Heart left ventricle (tissue), 16 donors: ENCODE measurements at regions of chr6 and their contacts with region 1.

Region 1: GRCh38 chr6:155248008-155249001 is 15.5 kb upstream of the CLDN20 start:
- DNase-seq: peak in 3 of 5 donors; percentile 24 to 38 (median 34)
- ATAC-seq: peak in 3 of 4 donors; percentile 20 to 38 (median 37)
- H3K4me3 ChIP-seq: no peak overlapping the region
- H3K27ac ChIP-seq: peak overlapping the region in 1 of 12 donors; percentile 56
- H3K4me1 ChIP-seq: peaks cover 0 to 20% (median 6%) of the 10 kb centered on the region in 12 donors
- H3K27me3 ChIP-seq: no peaks in the 10 kb centered on the region
- CTCF ChIP-seq: peak; percentile 29 to 78 (median 58)
- POLR2A ChIP-seq: no peak

Region 2: DNA sequence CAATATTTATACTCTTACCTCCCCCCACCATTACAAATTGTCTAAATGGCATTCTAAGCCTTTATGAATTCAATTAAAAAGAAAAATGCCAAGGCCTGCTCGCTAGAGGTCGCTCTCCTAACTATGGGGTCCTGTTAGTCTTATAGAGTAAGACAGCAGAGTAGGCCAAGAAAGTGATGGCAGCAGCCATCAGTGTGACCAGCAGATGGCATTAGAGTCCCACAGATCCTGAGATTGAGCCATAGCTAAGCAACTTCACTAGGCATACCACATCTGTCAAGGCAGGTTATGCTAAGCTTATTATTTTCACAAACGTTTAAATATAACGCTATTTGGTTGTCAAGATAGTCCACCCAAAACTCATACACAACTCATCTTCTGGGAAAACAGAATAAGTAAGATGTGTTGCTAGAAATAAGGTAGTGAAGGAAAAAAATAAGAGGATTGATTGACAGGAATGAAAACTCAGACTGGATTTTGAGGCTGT is 572.7 kb before region 1 on chr6:
- intact Hi-C with region 1: loop called in 2 of 10 experiments (anchors 10 kb)
- DNase-seq: peak; percentile 74 to 87 (median 83)
- ATAC-seq: peak; percentile 94 to 99 (median 98)
- H3K4me3 ChIP-seq: no peak overlapping the region
- H3K27ac ChIP-seq: no peak overlapping the region
- H3K4me1 ChIP-seq: no peaks in the 10 kb centered on the region
- H3K27me3 ChIP-seq: no peaks in the 10 kb centered on the region
- CTCF ChIP-seq: peak; percentile 95 to 100 (median 100)
- POLR2A ChIP-seq: no peak

Region 3: DNA sequence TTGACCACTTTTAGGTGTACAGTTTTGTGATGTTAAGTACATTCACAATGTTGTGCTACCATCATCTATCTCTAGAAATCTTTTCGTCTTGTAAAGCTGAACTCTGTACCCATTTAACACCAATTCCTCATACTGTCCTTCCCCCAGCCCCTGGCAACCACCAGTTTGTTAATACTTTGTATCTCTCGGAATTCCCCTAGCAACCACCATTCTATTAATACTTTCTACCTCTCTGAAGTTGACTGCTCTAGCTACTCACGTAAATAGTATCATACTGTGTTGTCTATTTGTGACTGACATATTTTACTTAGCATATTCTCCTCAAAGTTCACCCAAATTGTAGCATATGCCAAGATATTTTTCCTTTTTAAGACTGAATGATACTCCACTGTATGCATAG is 66.8 kb before region 1 on chr6:
- intact Hi-C with region 1: loop called (anchors 2 to 5 kb)
- DNase-seq: no peak
- ATAC-seq: no peak
- H3K4me3 ChIP-seq: no peak overlapping the region
- H3K27ac ChIP-seq: no peak overlapping the region
- H3K4me1 ChIP-seq: peaks cover 0 to 16% (median 2%) of the 10 kb centered on the region in 12 donors
- H3K27me3 ChIP-seq: no peaks in the 10 kb centered on the region
- CTCF ChIP-seq: no peak
- POLR2A ChIP-seq: no peak